Posterior cingulate gyrus (tissue), 11 donors: ENCODE measurements at regions of chr17 and their contacts with region 1.

Region 1: DNA sequence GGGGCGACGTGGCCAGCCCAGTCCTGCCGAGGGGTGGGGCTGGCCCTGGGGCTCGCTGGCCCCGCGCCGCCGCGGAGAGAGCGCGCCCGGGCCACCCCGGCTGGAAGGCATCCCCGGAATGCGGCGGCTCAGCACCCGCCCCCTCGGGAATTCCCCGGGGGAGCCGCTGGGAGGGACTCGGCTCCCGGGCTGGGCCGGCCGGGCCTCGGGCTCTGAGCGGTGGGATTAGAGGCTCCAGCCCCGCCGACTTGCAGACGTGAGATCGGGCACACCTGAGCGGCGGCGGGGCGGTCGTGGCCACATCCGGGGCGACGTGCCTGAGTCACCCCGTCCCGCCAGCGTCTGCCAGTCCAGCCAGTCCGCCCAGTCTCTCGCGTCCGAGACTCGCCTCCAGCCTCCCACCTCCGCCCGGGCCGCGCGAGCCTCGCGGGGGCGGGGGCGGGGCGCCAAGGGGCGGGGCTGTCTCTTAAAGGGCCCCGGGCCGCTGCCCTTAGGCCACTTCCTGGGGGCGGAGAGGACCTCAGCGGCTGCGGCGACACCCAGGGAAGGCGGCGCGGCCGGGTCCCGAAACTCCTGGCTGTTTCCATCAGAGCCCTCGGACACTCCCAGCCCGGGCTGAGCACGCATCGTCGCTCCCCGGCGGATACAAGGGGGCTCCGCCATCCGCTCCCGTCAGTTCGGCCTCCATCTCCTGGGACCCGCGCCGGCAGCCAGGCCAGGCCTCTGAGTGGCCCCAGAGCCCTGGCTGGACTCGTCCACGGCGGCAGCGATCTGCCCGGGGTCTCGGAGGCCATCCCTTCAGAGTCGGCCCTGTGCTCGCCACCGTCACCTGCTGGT is at the start of gene KCTD11:
- DNase-seq: peak; percentile 73 to 97 (median 80)

Region 2: GRCh38 chr17:7384489-7385081 is 32.7 kb after region 1 on chr17:
- intact Hi-C with region 1: loop called (anchors 5 kb)
- DNase-seq: no peak

Region 3: DNA sequence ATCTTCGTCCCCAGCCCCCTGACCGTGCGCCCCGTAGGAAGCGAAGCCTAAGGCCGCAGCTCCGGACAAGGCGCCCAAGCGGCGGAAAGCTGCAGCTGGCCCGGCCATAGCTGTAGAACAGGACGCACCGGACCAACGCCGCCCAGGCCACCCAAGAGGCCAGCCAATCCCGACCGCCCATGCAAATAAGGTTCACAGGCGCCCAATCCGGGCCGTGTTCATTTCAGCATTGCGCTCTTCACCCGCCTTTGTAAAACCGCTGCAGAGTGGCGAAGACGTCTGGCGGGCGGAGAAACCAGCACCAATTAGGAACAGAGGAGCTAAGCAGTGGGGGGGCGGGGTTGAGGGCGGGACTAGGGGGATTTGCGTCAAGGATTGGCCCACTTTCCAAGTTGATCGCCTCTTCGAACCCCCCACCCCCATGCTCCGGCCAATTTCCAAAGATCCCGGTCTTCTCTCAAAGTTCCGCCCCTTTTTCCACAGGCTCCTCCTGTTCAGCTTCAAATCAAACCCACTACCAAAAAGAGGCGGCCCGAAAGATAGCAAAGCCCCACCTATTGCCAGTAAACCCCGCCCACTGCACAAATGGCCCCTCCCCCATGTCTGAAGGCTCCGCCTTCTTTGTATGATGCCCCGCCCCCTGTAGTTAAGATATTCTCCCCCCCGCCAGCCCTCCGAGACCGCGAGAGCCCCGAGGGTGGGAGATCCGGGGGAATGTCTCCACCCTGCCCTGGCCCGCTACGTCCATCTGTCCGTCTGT is 52.3 kb after region 1 on chr17 and contains the start of gene TMEM256:
- intact Hi-C with region 1: loop called (anchors 2 kb)
- DNase-seq: peak; percentile 99 to 100 (median 100)

Region 4: GRCh38 chr17:7435221-7435675 is 83.4 kb after region 1 on chr17 and contains the start of gene TMEM102:
- intact Hi-C with region 1: loop called (anchors 5 kb)
- DNase-seq: peak; percentile 77 to 98 (median 84)

Region 5: DNA sequence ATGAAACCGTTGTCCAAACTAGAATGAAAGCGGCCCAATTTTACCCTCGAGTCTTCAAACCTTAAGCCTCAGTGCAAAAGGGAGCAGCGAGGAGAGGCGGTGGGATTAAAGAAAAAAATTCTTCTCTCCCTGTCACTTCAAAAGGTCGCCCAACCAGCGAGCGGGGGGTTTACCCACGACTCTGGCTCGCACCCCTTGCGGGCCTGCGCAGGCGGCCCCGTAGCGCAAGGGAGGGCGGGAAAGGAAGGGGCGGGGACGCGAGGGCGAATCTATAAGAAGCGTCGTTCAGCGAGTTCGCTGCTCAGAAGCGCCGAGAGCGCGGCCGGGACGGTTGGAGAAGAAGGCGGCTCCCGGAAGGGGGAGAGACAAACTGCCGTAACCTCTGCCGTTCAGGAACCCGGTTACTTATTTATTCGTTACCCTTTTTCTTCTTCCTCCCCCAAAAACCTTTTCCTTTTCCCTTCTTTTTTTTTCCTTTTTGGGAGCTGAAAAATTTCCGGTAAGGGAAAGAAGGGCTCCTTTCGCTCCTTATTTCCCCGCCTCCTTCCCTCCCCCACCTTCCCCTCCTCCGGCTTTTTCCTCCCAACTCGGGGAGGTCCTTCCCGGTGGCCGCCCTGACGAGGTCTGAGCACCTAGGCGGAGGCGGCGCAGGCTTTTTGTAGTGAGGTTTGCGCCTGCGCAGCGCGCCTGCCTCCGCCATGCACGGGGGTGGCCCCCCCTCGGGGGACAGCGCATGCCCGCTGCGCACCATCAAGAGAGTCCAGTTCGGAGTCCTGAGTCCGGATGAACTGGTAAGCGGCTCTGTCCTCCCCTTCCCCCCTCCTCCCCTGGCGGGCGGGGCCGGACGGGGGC is 132.4 kb after region 1 on chr17 and contains the start of gene POLR2A:
- intact Hi-C with region 1: loop called (anchors 10 kb)
- DNase-seq: peak; percentile 96 to 99 (median 98)

Region 6: DNA sequence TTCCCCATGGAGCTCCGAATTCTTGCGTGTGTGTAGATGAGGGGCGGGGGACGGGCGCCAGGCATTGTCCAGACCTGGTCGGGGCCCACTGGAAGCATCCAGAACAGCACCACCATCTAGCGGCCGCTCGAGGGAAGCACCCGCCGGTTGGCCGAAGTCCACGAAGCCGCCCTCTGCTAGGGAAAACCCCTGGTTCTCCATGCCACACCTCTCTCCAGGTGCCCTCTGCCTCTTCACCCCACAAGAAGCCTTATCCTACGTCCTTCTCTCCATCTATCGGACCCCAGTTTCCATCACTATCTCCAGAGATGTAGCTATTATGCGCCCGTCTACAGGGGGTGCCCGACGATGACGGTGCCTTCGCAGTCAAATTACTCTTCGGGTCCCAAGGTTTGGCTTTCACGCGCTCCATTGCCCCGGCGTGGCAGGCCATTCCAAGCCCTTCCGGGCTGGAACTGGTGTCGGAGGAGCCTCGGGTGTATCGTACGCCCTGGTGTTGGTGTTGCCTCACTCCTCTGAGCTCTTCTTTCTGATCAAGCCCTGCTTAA is 209.2 kb after region 1 on chr17:
- intact Hi-C with region 1: loop called (anchors 5 kb)
- DNase-seq: peak; percentile 77 to 98 (median 90)